ENCODE measurements at regions of chr15 and their contacts with region 1.

Region 1: GRCh38 chr15:85443593-85444087 is 63.2 kb downstream of the AKAP13 start:
- DNase-seq: peak; percentile 76
- ATAC-seq: peak; percentile 90
- H3K4me3 ChIP-seq: no peak overlapping the region
- H3K27ac ChIP-seq: peak overlapping the region; percentile 66; the same call in 1 of the 2 replicates
- H3K4me1 ChIP-seq: peaks cover 28% of the 10 kb centered on the region
- H3K27me3 ChIP-seq: no peaks in the 10 kb centered on the region
- CTCF ChIP-seq: no peak
- EP300 ChIP-seq: peak; percentile 68 to 89; a peak in 3 of 4 replicates
- POLR2A ChIP-seq: no peak
- RAD21 ChIP-seq: no peak

Region 2: GRCh38 chr15:85422607-85423006 is 21.0 kb before region 1 on chr15:
- CTCF ChIA-PET with region 1: interaction called, 4 read pairs
- POLR2A ChIA-PET with region 1: interaction called, 7 read pairs
- RAD21 ChIA-PET with region 1: interaction called, 5 read pairs
- SMC1A ChIA-PET with region 1: interaction called, 13 read pairs
- in situ Hi-C with region 1: no loop called
- intact Hi-C with region 1: no loop called
- DNase-seq: no peak
- ATAC-seq: peak; percentile 25; the same call in 1 of the 3 replicates
- H3K4me3 ChIP-seq: no peak overlapping the region
- H3K27ac ChIP-seq: no peak overlapping the region
- H3K4me1 ChIP-seq: peaks cover 23% of the 10 kb centered on the region
- H3K27me3 ChIP-seq: no peaks in the 10 kb centered on the region
- CTCF ChIP-seq: no peak
- EP300 ChIP-seq: no peak
- POLR2A ChIP-seq: no peak
- RAD21 ChIP-seq: no peak

Region 3: DNA sequence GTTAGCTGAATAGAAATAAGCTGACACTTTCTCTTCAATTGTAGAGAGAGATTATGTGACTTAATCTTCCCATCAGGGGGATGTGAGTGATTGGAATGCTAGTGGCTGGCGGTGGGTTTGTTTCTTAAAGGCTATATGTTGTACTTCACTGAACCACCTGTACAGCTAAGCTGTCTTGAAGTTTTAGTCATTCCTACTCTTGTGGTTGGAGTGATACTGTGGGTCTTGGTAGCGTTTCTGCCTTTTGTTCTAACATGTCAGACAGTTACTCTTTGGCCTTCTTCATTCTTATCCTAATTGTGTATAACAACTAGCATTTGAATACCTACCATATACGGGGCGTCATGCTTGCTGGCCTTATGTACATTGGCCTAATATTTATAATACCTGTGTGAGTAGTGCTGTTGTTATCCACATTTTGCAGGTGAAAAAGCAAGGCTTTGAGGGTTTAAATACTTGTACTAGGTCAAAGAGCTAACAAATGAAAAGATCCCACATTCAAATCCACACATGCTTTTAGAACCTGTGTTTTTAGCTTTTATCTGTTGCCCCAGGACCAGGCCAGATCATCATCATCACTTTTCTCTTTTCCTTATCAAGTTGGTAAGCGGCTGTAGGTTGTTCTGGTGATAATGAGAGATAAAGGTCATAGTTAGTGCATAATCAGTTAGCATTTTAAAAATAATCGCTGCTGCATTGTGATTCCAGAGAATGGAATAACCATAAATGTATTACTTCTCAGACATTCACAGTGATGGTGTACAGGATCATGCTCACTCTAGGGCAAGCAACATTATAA is 13.0 kb before region 1 on chr15:
- CTCF ChIA-PET with region 1: interaction called, 19 read pairs
- POLR2A ChIA-PET with region 1: interaction called, 5 read pairs
- RAD21 ChIA-PET with region 1: interaction called, 14 read pairs
- SMC1A ChIA-PET with region 1: interaction called, 18 read pairs
- in situ Hi-C with region 1: no loop called
- intact Hi-C with region 1: no loop called
- DNase-seq: peak; percentile 53
- ATAC-seq: peak; percentile 99
- H3K4me3 ChIP-seq: no peak overlapping the region
- H3K27ac ChIP-seq: peak overlapping the region; percentile 20
- H3K4me1 ChIP-seq: peaks cover 30% of the 10 kb centered on the region
- H3K27me3 ChIP-seq: no peaks in the 10 kb centered on the region
- CTCF ChIP-seq: no peak
- EP300 ChIP-seq: no peak
- POLR2A ChIP-seq: no peak
- RAD21 ChIP-seq: no peak

Region 4: GRCh38 chr15:85456798-85457197 is 13.2 kb after region 1 on chr15:
- CTCF ChIA-PET with region 1: no interaction called
- POLR2A ChIA-PET with region 1: interaction called, 3 read pairs
- RAD21 ChIA-PET with region 1: interaction called, 5 read pairs
- SMC1A ChIA-PET with region 1: interaction called, 19 read pairs
- in situ Hi-C with region 1: no loop called
- intact Hi-C with region 1: no loop called
- DNase-seq: no peak
- ATAC-seq: peak; percentile 73
- H3K4me3 ChIP-seq: 0 out of 2 replicates have a peak overlapping the region, but pooled peaks have one; percentile 35
- H3K27ac ChIP-seq: peak overlapping the region; percentile 77
- H3K4me1 ChIP-seq: peaks cover 47% of the 10 kb centered on the region
- H3K27me3 ChIP-seq: no peaks in the 10 kb centered on the region
- CTCF ChIP-seq: no peak
- EP300 ChIP-seq: no peak; a peak in 1 of 4 replicates
- POLR2A ChIP-seq: no peak
- RAD21 ChIP-seq: no peak

Region 5: DNA sequence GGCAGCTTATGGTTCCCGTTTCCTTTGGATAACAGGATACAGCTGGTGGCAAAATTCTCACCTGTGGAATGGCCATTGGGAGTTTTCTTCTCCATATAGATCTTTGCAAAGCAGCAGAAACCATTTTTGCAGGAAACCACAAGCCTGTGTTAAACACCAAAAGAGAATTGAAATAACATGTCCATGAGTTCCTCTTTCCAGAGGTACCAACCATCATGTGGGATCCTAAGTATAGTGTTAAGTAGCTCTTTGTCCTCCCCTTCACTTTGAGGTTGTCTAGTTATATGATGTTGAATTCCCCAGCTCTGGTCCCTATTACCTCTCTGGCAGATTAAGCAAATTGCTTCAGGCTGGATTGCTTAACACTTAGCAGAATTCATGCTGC is 31.7 kb after region 1 on chr15:
- CTCF ChIA-PET with region 1: interaction called, 9 read pairs
- POLR2A ChIA-PET with region 1: interaction called, 3 read pairs
- RAD21 ChIA-PET with region 1: interaction called, 8 read pairs
- SMC1A ChIA-PET with region 1: interaction called, 27 read pairs
- in situ Hi-C with region 1: no loop called
- intact Hi-C with region 1: no loop called
- DNase-seq: peak; percentile 85
- ATAC-seq: peak; percentile 89
- H3K4me3 ChIP-seq: peak overlapping the region; percentile 39; the same call in 1 of the 2 replicates
- H3K27ac ChIP-seq: peak overlapping the region; percentile 90
- H3K4me1 ChIP-seq: peaks cover 42% of the 10 kb centered on the region
- H3K27me3 ChIP-seq: no peaks in the 10 kb centered on the region
- CTCF ChIP-seq: no peak
- EP300 ChIP-seq: peak; percentile 26 to 44; a peak in 1 of 4 replicates
- POLR2A ChIP-seq: no peak
- RAD21 ChIP-seq: 0 out of 2 replicates have a peak, but pooled peaks have one; percentile 8

Region 6: DNA sequence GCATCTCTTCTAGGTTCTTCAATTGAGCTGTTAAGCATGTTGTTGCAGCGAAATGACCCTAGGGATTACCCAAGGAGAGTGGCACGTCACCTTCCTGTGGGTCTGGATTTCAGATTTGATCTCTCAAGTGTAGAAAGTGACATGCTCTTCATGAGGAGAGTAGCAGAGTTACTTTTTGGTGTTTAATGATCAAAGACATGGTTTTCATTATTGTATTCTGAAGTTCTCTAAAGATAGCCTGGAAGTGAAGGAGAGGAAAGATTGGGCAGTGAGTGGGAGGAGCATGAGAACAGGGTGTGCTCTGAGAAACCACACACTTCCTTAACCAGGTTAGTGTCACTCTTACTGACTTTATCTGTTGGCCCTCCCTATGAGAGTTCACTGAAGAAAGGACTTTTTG is 90.4 kb after region 1 on chr15:
- CTCF ChIA-PET with region 1: no interaction called
- POLR2A ChIA-PET with region 1: no interaction called
- RAD21 ChIA-PET with region 1: no interaction called
- SMC1A ChIA-PET with region 1: no interaction called
- in situ Hi-C with region 1: no loop called
- intact Hi-C with region 1: no loop called
- DNase-seq: no peak
- ATAC-seq: peak; percentile 90
- H3K4me3 ChIP-seq: no peak overlapping the region
- H3K27ac ChIP-seq: no peak overlapping the region
- H3K4me1 ChIP-seq: peaks cover 23% of the 10 kb centered on the region
- H3K27me3 ChIP-seq: no peaks in the 10 kb centered on the region
- CTCF ChIP-seq: no peak
- EP300 ChIP-seq: no peak
- POLR2A ChIP-seq: no peak
- RAD21 ChIP-seq: no peak